ENCODE measurements at regions of chr11 and their contacts with region 1.

Region 1: DNA sequence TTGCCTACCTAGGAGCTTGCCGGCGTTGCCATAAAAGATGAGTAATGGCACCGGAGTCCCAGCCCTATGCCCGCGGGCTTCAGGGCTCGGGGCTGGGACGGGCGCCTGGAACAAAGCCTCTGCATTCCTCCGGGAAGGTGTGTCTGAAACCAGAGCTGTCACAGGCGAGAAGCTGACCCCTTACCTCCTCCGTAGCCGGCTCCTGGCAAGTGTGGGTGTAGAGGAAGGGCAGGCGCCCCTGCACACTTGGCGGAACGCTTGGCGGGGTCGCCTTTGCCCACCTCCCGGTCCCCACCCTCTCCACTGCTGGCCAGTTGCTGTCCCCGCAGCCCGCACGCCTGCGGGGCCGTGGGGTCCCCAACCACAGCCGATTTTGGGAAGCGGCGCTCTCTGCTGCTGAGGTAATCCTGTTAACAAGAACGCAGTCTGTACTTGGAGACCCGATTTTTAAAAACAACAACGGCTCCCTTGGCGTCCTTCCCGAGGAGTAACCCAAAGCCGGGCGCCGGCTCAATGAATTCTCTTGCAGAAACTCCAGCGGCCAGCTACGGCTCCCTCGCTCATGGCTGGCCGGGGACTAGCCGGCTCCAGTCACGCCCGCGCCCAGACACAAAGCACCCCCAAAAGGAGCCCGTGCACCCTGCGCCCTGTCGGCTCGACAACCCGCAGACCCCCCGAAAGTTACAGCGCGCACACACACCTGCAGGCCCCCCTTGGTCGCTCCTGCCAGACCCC is 89.2 kb downstream of the PLEKHA7 start:
- DNase-seq: peak; percentile 96 to 97
- H3K4me3 ChIP-seq: peak overlapping the region; percentile 20 to 44 (median 42)
- H3K27ac ChIP-seq: peak overlapping the region; percentile 77 to 93 (median 85)
- H3K4me1 ChIP-seq: peaks cover 10 to 62% of the 10 kb centered on the region in 2 donors
- H3K27me3 ChIP-seq: no peaks in the 10 kb centered on the region
- CTCF ChIP-seq: no peak
- POLR2A ChIP-seq: peak in 1 of 2 donors; percentile 26

Region 2: DNA sequence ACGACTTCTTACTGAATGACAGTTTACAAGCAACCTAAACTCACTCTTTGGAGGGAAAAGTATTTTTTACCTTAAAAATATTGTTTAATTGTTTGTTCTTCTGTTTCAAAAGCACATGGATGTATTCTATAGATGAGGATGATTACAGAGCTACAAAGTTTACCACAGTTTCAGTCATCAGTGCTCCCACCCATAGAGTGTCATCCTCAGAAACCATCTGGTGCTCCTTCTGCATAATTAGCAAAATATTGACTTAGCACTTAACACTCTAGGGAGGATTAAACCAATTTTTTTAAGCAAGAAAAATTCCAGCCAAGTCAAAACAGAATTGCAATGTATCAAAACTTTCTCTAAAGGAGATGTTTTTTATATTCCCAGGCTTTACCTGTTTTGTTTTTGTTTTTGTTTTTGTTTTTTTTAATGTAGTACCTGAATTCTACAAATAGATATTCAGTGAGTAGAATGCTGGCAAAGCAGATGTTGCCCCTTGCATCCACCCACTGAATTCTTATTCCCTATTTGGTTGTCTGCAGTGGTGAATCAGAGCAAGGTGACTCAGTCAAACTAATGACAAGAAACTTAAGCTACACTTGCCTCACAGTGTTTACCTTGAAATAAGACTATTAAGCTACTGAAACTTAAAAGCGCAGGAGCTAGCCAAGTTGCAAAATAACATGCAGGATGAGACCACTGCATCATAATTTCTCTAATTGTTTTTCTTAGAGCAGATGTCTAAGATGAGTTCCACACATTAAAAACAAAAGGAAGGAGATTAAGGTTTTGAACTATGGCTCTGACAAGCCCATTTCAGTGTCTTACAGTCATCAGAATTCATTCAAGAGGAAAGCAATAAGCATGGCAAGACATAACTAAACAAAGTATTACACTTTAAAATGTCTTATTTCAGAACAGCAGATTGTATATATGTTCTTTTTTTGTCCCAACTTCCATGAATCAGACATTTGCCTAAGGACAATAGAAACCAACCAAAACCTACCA is 413.6 kb before region 1 on chr11:
- intact Hi-C with region 1: no loop called
- DNase-seq: no peak
- H3K4me3 ChIP-seq: no peak overlapping the region
- H3K27ac ChIP-seq: no peak overlapping the region
- H3K4me1 ChIP-seq: no peaks in the 10 kb centered on the region
- H3K27me3 ChIP-seq: no peaks in the 10 kb centered on the region
- CTCF ChIP-seq: no peak
- POLR2A ChIP-seq: no peak

Region 3: GRCh38 chr11:16809886-16810668 is 114.9 kb before region 1 on chr11:
- intact Hi-C with region 1: loop called (anchors 10 kb)
- DNase-seq: peak; percentile 78 to 81
- H3K4me3 ChIP-seq: no peak overlapping the region
- H3K27ac ChIP-seq: peak overlapping the region in 1 of 3 donors; percentile 73
- H3K4me1 ChIP-seq: peaks cover 26 to 73% of the 10 kb centered on the region in 2 donors
- H3K27me3 ChIP-seq: no peaks in the 10 kb centered on the region
- CTCF ChIP-seq: no peak
- POLR2A ChIP-seq: no peak